CD4-positive, alpha-beta T cell (primary cell): ENCODE measurements at regions of chr7 and their contacts with region 1.

Region 1: GRCh38 chr7:53191191-53191695 is 155.8 kb downstream of the POM121L12 start:
- DNase-seq: no peak
- ATAC-seq: no peak
- H3K4me3 ChIP-seq: no peak overlapping the region
- H3K4me3 Mint-ChIP-seq: no peak overlapping the region
- H3K27ac ChIP-seq: no peak overlapping the region
- H3K27ac Mint-ChIP-seq: no peak overlapping the region
- H3K4me1 ChIP-seq: no peaks in the 10 kb centered on the region
- H3K4me1 Mint-ChIP-seq: no peaks in the 10 kb centered on the region
- H3K27me3 ChIP-seq: no peaks in the 10 kb centered on the region
- H3K27me3 Mint-ChIP-seq: no peaks in the 10 kb centered on the region
- CTCF ChIP-seq: no peak

Region 2: DNA sequence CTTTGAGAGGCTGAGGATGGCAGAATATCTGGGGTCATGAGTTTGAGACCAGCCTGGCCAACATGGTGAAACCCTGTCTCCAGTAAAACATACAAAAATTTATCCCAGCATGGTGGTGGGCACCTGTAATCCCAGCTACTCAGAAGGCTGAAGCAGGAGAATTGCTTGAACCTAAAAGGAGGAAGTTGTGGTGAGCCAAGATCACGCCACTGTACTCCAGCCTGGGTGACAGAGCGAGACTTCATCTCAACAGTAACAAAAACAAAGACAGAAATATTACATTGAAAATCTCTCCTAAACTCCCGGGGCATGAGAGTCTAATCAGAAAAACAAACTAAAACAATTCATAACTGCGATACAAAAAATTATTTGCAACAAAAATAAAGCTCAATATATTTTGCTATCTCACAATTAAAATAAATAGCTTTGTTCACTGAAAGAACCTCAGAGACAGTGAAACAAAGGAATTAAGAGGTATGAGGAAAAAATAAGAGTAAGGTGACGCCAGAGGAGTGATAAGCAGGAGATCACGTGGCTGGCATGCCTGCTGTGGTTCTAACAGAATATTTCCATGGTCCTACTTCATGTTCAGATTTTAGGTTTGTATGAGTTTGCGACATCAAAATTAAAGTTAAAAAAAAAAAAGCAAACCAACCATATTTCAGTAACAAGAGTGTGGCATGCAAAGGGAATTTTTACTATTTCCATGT is 683.5 kb before region 1 on chr7:
- CTCF ChIA-PET with region 1: no interaction called
- POLR2A ChIA-PET with region 1: no interaction called
- intact Hi-C with region 1: no loop called
- DNase-seq: no peak
- ATAC-seq: no peak
- H3K4me3 ChIP-seq: no peak overlapping the region
- H3K4me3 Mint-ChIP-seq: no peak overlapping the region
- H3K27ac ChIP-seq: no peak overlapping the region
- H3K27ac Mint-ChIP-seq: no peak overlapping the region
- H3K4me1 ChIP-seq: no peaks in the 10 kb centered on the region
- H3K4me1 Mint-ChIP-seq: no peaks in the 10 kb centered on the region
- H3K27me3 ChIP-seq: no peaks in the 10 kb centered on the region
- H3K27me3 Mint-ChIP-seq: no peaks in the 10 kb centered on the region
- CTCF ChIP-seq: no peak

Region 3: DNA sequence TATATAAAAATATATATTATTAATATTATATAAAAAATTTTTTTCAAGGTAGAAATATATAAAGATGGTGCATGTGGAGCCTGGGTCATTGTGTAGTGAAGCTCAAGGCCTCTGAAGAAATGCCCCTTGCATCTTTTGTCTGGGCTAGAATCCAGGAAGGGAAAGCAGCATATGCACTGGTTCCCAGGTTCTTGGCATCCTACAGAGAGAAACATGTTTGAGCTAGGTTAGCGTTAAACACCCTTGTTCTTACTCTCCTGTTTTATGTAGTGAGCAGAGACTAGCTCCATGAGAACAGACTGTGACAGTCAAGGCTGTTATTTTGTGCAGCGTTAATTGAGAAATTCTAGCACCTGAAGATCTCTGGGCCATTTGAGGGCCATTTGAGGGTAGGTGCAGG is 39.7 kb before region 1 on chr7:
- CTCF ChIA-PET with region 1: no interaction called
- POLR2A ChIA-PET with region 1: no interaction called
- intact Hi-C with region 1: no loop called
- DNase-seq: no peak
- ATAC-seq: no peak
- H3K4me3 ChIP-seq: no peak overlapping the region
- H3K4me3 Mint-ChIP-seq: no peak overlapping the region
- H3K27ac ChIP-seq: no peak overlapping the region
- H3K27ac Mint-ChIP-seq: no peak overlapping the region
- H3K4me1 ChIP-seq: no peaks in the 10 kb centered on the region
- H3K4me1 Mint-ChIP-seq: no peaks in the 10 kb centered on the region
- H3K27me3 ChIP-seq: no peaks in the 10 kb centered on the region
- H3K27me3 Mint-ChIP-seq: no peaks in the 10 kb centered on the region
- CTCF ChIP-seq: no peak

Region 4: DNA sequence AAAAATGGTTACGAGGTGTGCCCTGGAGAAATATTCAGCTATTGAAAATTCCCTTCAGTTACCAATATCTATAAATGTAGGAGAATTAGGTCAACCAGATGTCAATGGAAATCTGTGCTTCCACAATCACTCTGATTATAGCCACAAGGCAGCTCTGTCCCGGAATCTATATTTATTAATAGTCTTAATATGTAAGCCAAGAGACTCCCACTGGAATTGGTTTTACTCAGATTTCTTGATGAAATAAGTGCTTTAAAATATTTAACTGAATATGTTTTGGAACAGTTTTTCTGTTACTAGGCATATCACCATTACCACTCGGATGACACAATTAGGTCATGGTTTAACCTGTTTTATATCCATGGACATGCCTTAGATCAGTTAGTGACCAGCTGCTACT is 13.8 kb after region 1 on chr7:
- CTCF ChIA-PET with region 1: no interaction called
- POLR2A ChIA-PET with region 1: no interaction called
- intact Hi-C with region 1: no loop called
- DNase-seq: no peak
- ATAC-seq: no peak
- H3K4me3 ChIP-seq: no peak overlapping the region
- H3K4me3 Mint-ChIP-seq: no peak overlapping the region
- H3K27ac ChIP-seq: no peak overlapping the region
- H3K27ac Mint-ChIP-seq: no peak overlapping the region
- H3K4me1 ChIP-seq: no peaks in the 10 kb centered on the region
- H3K4me1 Mint-ChIP-seq: no peaks in the 10 kb centered on the region
- H3K27me3 ChIP-seq: no peaks in the 10 kb centered on the region
- H3K27me3 Mint-ChIP-seq: no peaks in the 10 kb centered on the region
- CTCF ChIP-seq: no peak

Region 5: GRCh38 chr7:53218730-53219504 is 27.7 kb after region 1 on chr7:
- CTCF ChIA-PET with region 1: no interaction called
- POLR2A ChIA-PET with region 1: no interaction called
- intact Hi-C with region 1: no loop called
- DNase-seq: no peak
- ATAC-seq: no peak
- H3K4me3 ChIP-seq: no peak overlapping the region
- H3K4me3 Mint-ChIP-seq: no peak overlapping the region
- H3K27ac ChIP-seq: no peak overlapping the region
- H3K27ac Mint-ChIP-seq: no peak overlapping the region
- H3K4me1 ChIP-seq: no peaks in the 10 kb centered on the region
- H3K4me1 Mint-ChIP-seq: no peaks in the 10 kb centered on the region
- H3K27me3 ChIP-seq: no peaks in the 10 kb centered on the region
- H3K27me3 Mint-ChIP-seq: no peaks in the 10 kb centered on the region
- CTCF ChIP-seq: no peak

Region 6: GRCh38 chr7:53252539-53252938 is 61.3 kb after region 1 on chr7:
- CTCF ChIA-PET with region 1: no interaction called
- POLR2A ChIA-PET with region 1: no interaction called
- intact Hi-C with region 1: loop called in 1 of 2 experiments (anchors 10 kb)
- DNase-seq: no peak
- ATAC-seq: no peak
- H3K4me3 ChIP-seq: no peak overlapping the region
- H3K4me3 Mint-ChIP-seq: no peak overlapping the region
- H3K27ac ChIP-seq: no peak overlapping the region
- H3K27ac Mint-ChIP-seq: no peak overlapping the region
- H3K4me1 ChIP-seq: no peaks in the 10 kb centered on the region
- H3K4me1 Mint-ChIP-seq: no peaks in the 10 kb centered on the region
- H3K27me3 ChIP-seq: no peaks in the 10 kb centered on the region
- H3K27me3 Mint-ChIP-seq: no peaks in the 10 kb centered on the region
- CTCF ChIP-seq: no peak